CD4-positive, alpha-beta T cell (primary cell): ENCODE measurements at regions of chr9 and their contacts with region 1.

Region 1: DNA sequence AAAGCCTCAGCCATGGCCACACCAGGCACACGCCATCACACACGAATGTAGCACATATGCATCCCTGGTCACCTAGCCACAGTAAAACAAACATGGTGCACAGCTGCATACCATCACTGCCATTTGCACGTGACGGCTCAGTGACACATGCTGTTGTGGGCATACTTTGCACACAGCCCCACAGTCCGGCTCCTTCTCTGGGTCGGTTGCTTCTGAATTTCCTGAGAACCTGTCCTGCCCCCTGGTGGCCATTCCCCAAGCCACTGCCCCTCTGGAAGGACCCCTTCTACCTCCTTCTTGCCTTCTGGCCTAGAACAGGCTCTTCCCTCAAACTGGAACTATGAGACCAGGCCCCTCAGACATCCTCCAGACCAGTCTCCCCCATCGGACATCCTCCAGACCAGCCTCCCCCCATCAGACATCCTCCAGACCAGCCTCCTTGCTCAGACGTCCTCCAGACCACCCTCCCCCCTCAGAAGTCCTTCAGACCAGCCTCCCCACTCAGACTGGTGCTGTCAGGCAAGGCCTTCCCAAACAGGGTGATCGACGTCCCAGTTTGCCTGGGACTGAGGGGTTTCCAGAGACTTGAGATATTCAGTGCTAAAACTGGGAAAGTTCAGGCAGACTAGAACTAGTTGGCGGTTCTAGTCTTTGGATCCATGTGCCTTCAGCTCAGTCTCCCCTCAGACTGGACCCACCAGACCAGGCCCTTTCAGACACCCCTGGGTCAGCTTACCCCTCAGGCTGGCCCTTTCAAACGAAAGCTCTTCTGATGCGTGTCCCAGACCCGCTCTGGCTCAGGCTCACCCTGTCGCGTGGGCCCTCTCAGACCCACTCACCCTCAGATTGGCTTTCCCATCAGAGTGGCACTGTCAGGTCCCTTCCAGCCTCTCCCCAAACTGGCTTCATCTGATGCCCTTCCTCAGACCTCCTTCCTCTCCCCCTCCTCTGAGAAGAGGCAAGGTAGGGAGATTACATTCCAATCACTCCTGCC is 24.3 kb upstream of the ENHO start:
- DNase-seq: peak in 13 of 14 experiments; percentile 10 to 66 (median 29)
- ATAC-seq: peak; percentile 26
- H3K4me3 ChIP-seq: no peak overlapping the region
- H3K4me3 Mint-ChIP-seq: no peak overlapping the region
- H3K27ac ChIP-seq: no peak overlapping the region
- H3K27ac Mint-ChIP-seq: no peak overlapping the region
- H3K4me1 ChIP-seq: no peaks in the 10 kb centered on the region
- H3K4me1 Mint-ChIP-seq: no peaks in the 10 kb centered on the region
- H3K27me3 ChIP-seq: peaks cover 0 to 14% of the 10 kb centered on the region in 2 experiments
- H3K27me3 Mint-ChIP-seq: peaks cover 26% of the 10 kb centered on the region
- CTCF ChIP-seq: peak; percentile 35

Region 2: DNA sequence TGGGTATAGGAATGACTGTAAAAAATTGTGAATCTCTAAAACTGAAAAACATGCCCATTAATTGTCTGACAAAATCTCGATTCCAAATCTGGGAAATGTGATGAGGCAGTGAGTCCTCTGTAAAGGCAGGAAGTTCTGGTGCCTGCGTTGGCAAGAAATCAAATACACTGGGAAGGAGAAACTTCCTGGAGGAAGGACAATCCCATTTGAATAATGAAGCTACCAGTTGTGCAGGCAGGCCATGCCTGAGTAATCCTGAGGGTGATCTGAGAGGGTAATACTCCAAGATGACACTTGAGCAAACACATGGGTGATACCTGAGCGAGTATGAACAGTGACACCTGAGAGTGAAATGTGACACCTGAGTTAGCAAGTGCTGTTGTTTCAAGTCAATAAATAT is 267.7 kb before region 1 on chr9:
- CTCF ChIA-PET with region 1: no interaction called
- POLR2A ChIA-PET with region 1: no interaction called
- intact Hi-C with region 1: no loop called
- DNase-seq: no peak
- ATAC-seq: no peak
- H3K4me3 ChIP-seq: no peak overlapping the region
- H3K4me3 Mint-ChIP-seq: no peak overlapping the region
- H3K27ac ChIP-seq: no peak overlapping the region
- H3K27ac Mint-ChIP-seq: no peak overlapping the region
- H3K4me1 ChIP-seq: peaks cover 4% of the 10 kb centered on the region
- H3K4me1 Mint-ChIP-seq: peaks cover 6% of the 10 kb centered on the region
- H3K27me3 ChIP-seq: no peaks in the 10 kb centered on the region
- H3K27me3 Mint-ChIP-seq: no peaks in the 10 kb centered on the region
- CTCF ChIP-seq: no peak

Region 3: DNA sequence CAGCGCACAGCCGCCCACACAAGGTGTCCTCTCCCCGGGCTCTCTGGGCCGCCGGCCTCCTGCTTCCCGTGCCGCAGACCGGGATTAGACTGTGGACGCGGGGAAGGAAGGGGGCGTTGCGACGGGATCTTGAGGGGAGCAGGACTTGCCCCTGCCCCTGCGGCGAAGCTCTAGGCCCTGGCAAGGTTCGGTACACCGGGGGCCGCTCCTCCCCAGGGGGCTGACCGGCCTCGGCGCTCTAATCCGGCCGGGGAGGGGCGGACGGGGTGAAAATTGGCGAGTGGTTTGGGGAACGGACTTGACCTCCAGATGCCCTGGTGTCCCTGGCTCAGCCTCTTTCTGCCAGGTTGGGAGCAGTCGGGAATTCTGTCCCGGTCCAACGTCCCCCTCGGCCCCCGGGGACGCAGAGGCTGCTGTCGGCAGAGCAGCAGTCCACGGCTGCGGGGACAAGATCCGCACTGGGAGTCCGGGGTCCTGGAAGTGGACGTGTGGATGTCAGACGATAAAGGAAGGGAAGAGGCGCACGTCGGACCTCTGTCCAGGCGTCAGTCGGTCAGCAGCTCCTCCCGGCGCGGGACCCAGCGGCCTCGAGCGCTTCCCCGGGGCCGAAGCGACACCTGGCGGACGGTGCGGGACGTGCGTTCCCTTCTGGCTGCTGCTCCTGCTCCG is 44.3 kb after region 1 on chr9:
- CTCF ChIA-PET with region 1: interaction called, 3 read pairs
- POLR2A ChIA-PET with region 1: no interaction called
- intact Hi-C with region 1: loop called in 1 of 2 experiments (anchors 10 kb)
- DNase-seq: peak; percentile 51 to 87 (median 72)
- ATAC-seq: peak; percentile 76
- H3K4me3 ChIP-seq: peak overlapping the region; percentile 63
- H3K4me3 Mint-ChIP-seq: peak overlapping the region; percentile 80
- H3K27ac ChIP-seq: no peak overlapping the region
- H3K27ac Mint-ChIP-seq: no peak overlapping the region
- H3K4me1 ChIP-seq: peaks cover 30% of the 10 kb centered on the region
- H3K4me1 Mint-ChIP-seq: peaks cover 26% of the 10 kb centered on the region
- H3K27me3 ChIP-seq: peaks cover 69 to 75% of the 10 kb centered on the region in 2 experiments
- H3K27me3 Mint-ChIP-seq: peaks cover 83% of the 10 kb centered on the region
- CTCF ChIP-seq: peak; percentile 89

Region 4: DNA sequence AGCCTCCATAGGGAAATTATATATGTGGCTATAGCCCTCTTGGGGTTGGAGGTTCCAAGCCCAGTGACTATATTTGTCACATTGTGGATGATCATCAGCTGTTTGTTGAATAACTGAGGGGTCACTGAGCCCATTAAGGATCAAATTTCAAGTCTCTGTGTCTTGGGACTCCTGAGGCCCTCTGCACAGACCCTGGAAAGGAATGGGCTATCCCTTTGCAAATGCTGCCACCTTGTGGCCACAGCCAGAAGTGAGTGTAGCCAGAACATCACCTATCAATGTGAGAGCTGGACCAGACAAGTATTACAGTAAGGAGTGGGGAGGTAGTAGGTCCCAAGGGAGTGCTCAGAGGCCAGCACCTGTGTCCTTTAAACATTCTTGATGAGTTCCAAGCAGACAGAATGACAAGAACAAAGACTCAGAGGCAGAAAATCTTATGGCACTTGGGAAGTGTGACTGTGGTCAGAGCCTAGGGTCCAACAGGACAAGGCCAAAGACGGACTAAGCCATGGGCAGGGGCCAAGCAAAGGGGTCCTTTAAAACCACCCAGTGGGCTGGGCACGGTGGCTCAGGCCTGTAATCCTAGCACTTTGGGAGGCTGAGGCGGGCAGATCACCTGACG is 56.6 kb after region 1 on chr9:
- CTCF ChIA-PET with region 1: no interaction called
- POLR2A ChIA-PET with region 1: no interaction called
- intact Hi-C with region 1: loop called (anchors 2 to 10 kb)
- DNase-seq: peak; percentile 70 to 87 (median 78)
- ATAC-seq: peak; percentile 98
- H3K4me3 ChIP-seq: no peak overlapping the region
- H3K4me3 Mint-ChIP-seq: no peak overlapping the region
- H3K27ac ChIP-seq: no peak overlapping the region
- H3K27ac Mint-ChIP-seq: no peak overlapping the region
- H3K4me1 ChIP-seq: no peaks in the 10 kb centered on the region
- H3K4me1 Mint-ChIP-seq: no peaks in the 10 kb centered on the region
- H3K27me3 ChIP-seq: no peaks in the 10 kb centered on the region
- H3K27me3 Mint-ChIP-seq: peaks cover 5% of the 10 kb centered on the region
- CTCF ChIP-seq: peak; percentile 94

Region 5: DNA sequence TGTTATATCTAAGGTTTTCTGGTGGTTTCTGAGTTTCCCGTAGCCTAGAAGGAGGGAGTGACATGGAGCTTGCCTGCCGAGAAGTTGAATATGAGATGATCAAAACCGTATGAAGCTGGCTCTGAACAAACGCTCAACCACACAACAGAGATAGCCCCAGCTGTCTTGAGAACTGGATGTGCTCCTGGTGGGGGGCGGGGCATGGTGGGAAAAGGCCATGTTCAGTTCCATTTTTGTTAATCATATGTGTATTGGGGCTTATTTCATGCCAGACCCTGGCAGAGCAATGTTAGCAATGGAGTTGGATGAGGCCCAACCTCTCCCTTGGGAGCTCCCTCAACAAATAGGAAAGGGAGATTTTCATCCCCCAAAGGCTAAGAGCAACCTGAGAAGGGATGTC is 139.1 kb after region 1 on chr9:
- CTCF ChIA-PET with region 1: no interaction called
- POLR2A ChIA-PET with region 1: no interaction called
- intact Hi-C with region 1: no loop called
- DNase-seq: no peak
- ATAC-seq: no peak
- H3K4me3 ChIP-seq: no peak overlapping the region
- H3K4me3 Mint-ChIP-seq: no peak overlapping the region
- H3K27ac ChIP-seq: no peak overlapping the region
- H3K27ac Mint-ChIP-seq: no peak overlapping the region
- H3K4me1 ChIP-seq: no peaks in the 10 kb centered on the region
- H3K4me1 Mint-ChIP-seq: no peaks in the 10 kb centered on the region
- H3K27me3 ChIP-seq: no peaks in the 10 kb centered on the region
- H3K27me3 Mint-ChIP-seq: no peaks in the 10 kb centered on the region
- CTCF ChIP-seq: no peak

Region 6: DNA sequence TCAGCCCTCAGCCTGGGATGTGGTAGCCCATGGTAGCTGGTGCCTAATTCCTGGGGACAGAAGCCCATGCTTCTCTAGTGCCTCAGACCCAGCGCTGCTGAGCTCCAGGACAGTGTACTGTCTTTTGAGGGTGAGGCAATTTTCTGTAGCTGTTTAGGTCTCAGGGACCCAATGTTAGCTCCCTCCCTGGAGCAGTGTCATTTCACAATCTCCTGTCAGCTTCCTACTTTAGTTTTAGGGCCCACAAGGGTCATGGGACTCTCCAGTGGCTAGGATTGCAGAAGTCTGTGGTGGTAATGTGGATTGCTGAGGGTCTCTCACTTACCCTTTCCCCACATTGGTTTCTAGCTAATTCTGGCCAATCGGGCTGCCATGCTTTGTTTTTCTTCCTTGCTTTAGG is 230.5 kb after region 1 on chr9:
- CTCF ChIA-PET with region 1: no interaction called
- POLR2A ChIA-PET with region 1: no interaction called
- intact Hi-C with region 1: no loop called
- DNase-seq: peak in 1 of 14 experiments; percentile 4
- ATAC-seq: no peak
- H3K4me3 ChIP-seq: no peak overlapping the region
- H3K4me3 Mint-ChIP-seq: no peak overlapping the region
- H3K27ac ChIP-seq: no peak overlapping the region
- H3K27ac Mint-ChIP-seq: no peak overlapping the region
- H3K4me1 ChIP-seq: no peaks in the 10 kb centered on the region
- H3K4me1 Mint-ChIP-seq: no peaks in the 10 kb centered on the region
- H3K27me3 ChIP-seq: peaks cover 9 to 15% of the 10 kb centered on the region in 2 experiments
- H3K27me3 Mint-ChIP-seq: peaks cover 53% of the 10 kb centered on the region
- CTCF ChIP-seq: no peak